ENCODE measurements at regions of chr2 and their contacts with region 1.

Region 1: GRCh38 chr2:174682578-174683391 is 81.5 kb downstream of the CHRNA1 start:
- DNase-seq: peak; percentile 59
- ATAC-seq: peak; percentile 79
- H3K4me3 ChIP-seq: peak overlapping the region; percentile 93
- H3K27ac ChIP-seq: peak overlapping the region; percentile 64; the same call in 1 of the 2 replicates
- H3K4me1 ChIP-seq: peaks cover 2% of the 10 kb centered on the region; the same call in 1 of the 2 replicates
- H3K27me3 ChIP-seq: no peaks in the 10 kb centered on the region
- CTCF ChIP-seq: no peak
- POLR2A ChIP-seq: peak; percentile 20; the same call in 1 of the 2 replicates
- RAD21 ChIP-seq: no peak

Region 2: GRCh38 chr2:174577967-174578589 is 104.7 kb before region 1 on chr2:
- CTCF ChIA-PET with region 1: interaction called, 25 read pairs
- POLR2A ChIA-PET with region 1: interaction called, 3 read pairs
- dilution Hi-C with region 1: no loop called
- in situ Hi-C with region 1: no loop called
- intact Hi-C with region 1: loop called (anchors 1 kb)
- DNase-seq: peak; percentile 73
- ATAC-seq: peak; percentile 86
- H3K4me3 ChIP-seq: no peak overlapping the region
- H3K27ac ChIP-seq: no peak overlapping the region
- H3K4me1 ChIP-seq: no peaks in the 10 kb centered on the region; the same call in 1 of the 2 replicates
- H3K27me3 ChIP-seq: no peaks in the 10 kb centered on the region
- CTCF ChIP-seq: peak; percentile 86
- POLR2A ChIP-seq: 0 out of 2 replicates have a peak, but pooled peaks have one; percentile 22
- RAD21 ChIP-seq: peak; percentile 90

Region 3: GRCh38 chr2:174603280-174603679 is 79.5 kb before region 1 on chr2:
- CTCF ChIA-PET with region 1: interaction called, 3 read pairs
- POLR2A ChIA-PET with region 1: no interaction called
- dilution Hi-C with region 1: no loop called
- in situ Hi-C with region 1: no loop called
- intact Hi-C with region 1: loop called (anchors 1 kb)
- DNase-seq: peak; percentile 67
- ATAC-seq: peak; percentile 70
- H3K4me3 ChIP-seq: no peak overlapping the region
- H3K27ac ChIP-seq: no peak overlapping the region
- H3K4me1 ChIP-seq: peaks cover 2% of the 10 kb centered on the region
- H3K27me3 ChIP-seq: no peaks in the 10 kb centered on the region
- CTCF ChIP-seq: peak; percentile 42
- POLR2A ChIP-seq: no peak
- RAD21 ChIP-seq: peak; percentile 41; the same call in 1 of the 2 replicates

Region 4: DNA sequence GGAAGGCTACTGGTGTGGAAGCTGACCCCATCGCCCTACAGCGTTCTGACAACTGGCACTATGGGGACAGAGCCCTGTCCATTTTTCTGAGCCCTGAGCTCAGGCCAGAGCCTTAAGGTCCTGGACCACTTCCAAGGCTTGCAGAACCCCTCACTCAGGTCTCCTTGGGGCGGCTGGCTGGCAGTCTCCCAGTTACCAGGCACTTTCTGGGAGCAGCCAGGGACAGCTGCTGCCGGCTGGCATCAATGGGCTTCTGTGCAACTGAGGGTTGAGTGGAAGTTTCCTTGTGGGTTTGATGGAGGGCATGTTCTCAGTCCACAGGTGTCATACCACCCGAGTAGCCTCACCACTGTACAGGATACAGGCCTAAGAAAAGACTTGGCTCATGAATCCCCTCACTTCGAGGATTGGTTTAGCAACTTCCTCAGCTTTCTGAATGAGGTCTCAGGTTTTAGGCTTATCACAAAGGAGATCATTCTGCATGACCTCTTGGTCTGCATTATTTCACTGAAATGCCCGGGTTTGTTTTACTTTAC is 57.8 kb before region 1 on chr2:
- CTCF ChIA-PET with region 1: no interaction called
- POLR2A ChIA-PET with region 1: no interaction called
- dilution Hi-C with region 1: no loop called
- in situ Hi-C with region 1: no loop called
- intact Hi-C with region 1: loop called (anchors 5 kb)
- DNase-seq: no peak
- ATAC-seq: no peak
- H3K4me3 ChIP-seq: no peak overlapping the region
- H3K27ac ChIP-seq: no peak overlapping the region
- H3K4me1 ChIP-seq: no peaks in the 10 kb centered on the region
- H3K27me3 ChIP-seq: no peaks in the 10 kb centered on the region
- CTCF ChIP-seq: no peak
- POLR2A ChIP-seq: no peak
- RAD21 ChIP-seq: no peak